CD8-positive, alpha-beta memory T cell (primary cell): ENCODE measurements at regions of chr6 and their contacts with region 1.

Region 1: DNA sequence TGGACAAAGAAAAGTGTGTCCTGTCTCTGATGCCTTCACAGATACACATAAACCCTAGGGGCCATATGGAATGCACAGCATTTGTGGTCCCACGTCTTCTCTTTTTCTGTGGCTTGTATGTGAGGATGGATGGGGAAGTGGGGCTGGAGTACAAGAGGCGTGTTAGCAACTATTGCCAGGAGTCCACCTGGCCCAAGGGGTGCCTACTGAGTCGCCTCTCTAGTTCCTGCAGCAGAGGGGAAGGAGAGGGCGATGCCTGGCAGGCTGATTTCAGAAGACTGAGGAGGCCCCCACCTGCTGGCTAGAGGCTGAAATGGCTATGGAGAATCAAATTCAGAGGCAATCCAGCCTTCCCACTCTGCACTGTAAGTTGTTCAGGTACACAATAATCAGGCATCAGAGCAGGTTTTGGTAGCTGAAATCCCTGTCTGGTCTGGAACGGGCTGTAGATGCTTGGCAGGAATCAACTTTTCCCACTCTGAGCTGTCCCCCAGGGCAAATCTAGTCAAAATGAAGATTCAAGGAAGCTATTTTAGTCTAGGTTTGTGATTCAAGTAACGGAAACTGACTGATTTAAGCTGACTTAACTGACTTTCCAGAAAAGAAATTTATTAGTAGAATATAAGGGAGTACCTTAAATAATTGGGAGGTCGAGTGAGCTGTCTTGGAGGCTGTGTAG is 14.9 kb upstream of the PPARD start:
- DNase-seq: peak; percentile 57 to 84 (median 69)
- H3K4me3 ChIP-seq: no peak overlapping the region
- H3K4me3 Mint-ChIP-seq: peak overlapping the region in 1 of 7 donors; percentile 51
- H3K27ac ChIP-seq: no peak overlapping the region
- H3K27ac Mint-ChIP-seq: peak overlapping the region; percentile 69 to 92 (median 89)
- H3K4me1 ChIP-seq: peaks cover 18% of the 10 kb centered on the region
- H3K4me1 Mint-ChIP-seq: peaks cover 19 to 21% (median 20%) of the 10 kb centered on the region in 3 donors
- H3K27me3 ChIP-seq: no peaks in the 10 kb centered on the region
- H3K27me3 Mint-ChIP-seq: no peaks in the 10 kb centered on the region

Region 2: DNA sequence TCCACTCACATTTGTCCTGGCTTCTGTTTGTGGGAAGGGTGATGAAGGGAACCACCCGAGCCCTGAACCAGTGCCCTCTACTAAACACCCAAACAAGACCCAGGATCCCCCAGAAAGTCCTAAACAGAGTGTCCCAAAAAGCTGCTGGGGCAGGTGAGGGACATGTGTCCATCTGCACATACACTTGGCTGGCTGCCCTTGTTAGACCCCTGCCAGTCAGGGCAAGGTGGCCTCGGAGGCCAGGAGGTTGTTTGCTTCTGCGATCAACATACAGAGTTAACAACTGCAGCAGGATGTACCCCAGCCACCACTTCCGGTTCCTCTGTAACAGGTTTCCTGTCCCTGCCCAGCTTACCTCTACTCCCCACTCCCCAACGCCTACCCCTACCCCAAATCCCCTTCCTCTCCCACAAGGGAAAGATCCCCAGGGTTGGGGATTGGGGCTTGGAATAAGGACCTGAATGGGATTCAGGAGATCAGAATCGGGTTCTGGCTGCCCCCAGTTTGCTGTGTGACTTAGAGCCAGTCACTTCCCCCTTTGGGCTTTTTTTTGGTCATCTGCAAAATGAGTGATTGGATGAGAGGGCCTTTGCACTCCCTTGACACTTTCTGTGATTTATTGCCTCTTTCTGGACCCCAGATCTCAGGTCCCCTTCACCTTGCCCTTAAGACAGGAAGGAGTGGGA is 16.0 kb before region 1 on chr6:
- CTCF ChIA-PET with region 1: interaction called, 15 read pairs
- POLR2A ChIA-PET with region 1: interaction called, 4 read pairs
- DNase-seq: peak in 4 of 5 donors; percentile 40 to 71 (median 63)
- H3K4me3 ChIP-seq: peak overlapping the region; percentile 56
- H3K4me3 Mint-ChIP-seq: peak overlapping the region; percentile 57 to 93 (median 84)
- H3K27ac ChIP-seq: peak overlapping the region; percentile 69
- H3K27ac Mint-ChIP-seq: peak overlapping the region; percentile 96 to 99 (median 98)
- H3K4me1 ChIP-seq: peaks cover 91% of the 10 kb centered on the region
- H3K4me1 Mint-ChIP-seq: peaks cover 82 to 96% (median 94%) of the 10 kb centered on the region in 3 donors
- H3K27me3 ChIP-seq: no peaks in the 10 kb centered on the region
- H3K27me3 Mint-ChIP-seq: no peaks in the 10 kb centered on the region

Region 3: GRCh38 chr6:35611240-35611639 is 283.8 kb after region 1 on chr6:
- CTCF ChIA-PET with region 1: no interaction called
- POLR2A ChIA-PET with region 1: interaction called, 14 read pairs
- DNase-seq: peak in 3 of 5 donors; percentile 47 to 58 (median 54)
- H3K4me3 ChIP-seq: peak overlapping the region; percentile 26
- H3K4me3 Mint-ChIP-seq: peak overlapping the region; percentile 3 to 76 (median 69)
- H3K27ac ChIP-seq: no peak overlapping the region
- H3K27ac Mint-ChIP-seq: peak overlapping the region; percentile 75 to 97 (median 88)
- H3K4me1 ChIP-seq: peaks cover 36% of the 10 kb centered on the region
- H3K4me1 Mint-ChIP-seq: peaks cover 38 to 81% (median 70%) of the 10 kb centered on the region in 3 donors
- H3K27me3 ChIP-seq: no peaks in the 10 kb centered on the region
- H3K27me3 Mint-ChIP-seq: no peaks in the 10 kb centered on the region

Region 4: GRCh38 chr6:35993150-35993549 is 665.7 kb after region 1 on chr6:
- CTCF ChIA-PET with region 1: no interaction called
- POLR2A ChIA-PET with region 1: no interaction called
- DNase-seq: no peak
- H3K4me3 ChIP-seq: no peak overlapping the region
- H3K4me3 Mint-ChIP-seq: no peak overlapping the region
- H3K27ac ChIP-seq: no peak overlapping the region
- H3K27ac Mint-ChIP-seq: no peak overlapping the region
- H3K4me1 ChIP-seq: no peaks in the 10 kb centered on the region
- H3K4me1 Mint-ChIP-seq: no peaks in the 10 kb centered on the region
- H3K27me3 ChIP-seq: no peaks in the 10 kb centered on the region
- H3K27me3 Mint-ChIP-seq: peaks cover 7 to 21% of the 10 kb centered on the region in 2 donors